K562 (cell line): ENCODE measurements at regions of chr11 and their contacts with region 1.

Region 1: DNA sequence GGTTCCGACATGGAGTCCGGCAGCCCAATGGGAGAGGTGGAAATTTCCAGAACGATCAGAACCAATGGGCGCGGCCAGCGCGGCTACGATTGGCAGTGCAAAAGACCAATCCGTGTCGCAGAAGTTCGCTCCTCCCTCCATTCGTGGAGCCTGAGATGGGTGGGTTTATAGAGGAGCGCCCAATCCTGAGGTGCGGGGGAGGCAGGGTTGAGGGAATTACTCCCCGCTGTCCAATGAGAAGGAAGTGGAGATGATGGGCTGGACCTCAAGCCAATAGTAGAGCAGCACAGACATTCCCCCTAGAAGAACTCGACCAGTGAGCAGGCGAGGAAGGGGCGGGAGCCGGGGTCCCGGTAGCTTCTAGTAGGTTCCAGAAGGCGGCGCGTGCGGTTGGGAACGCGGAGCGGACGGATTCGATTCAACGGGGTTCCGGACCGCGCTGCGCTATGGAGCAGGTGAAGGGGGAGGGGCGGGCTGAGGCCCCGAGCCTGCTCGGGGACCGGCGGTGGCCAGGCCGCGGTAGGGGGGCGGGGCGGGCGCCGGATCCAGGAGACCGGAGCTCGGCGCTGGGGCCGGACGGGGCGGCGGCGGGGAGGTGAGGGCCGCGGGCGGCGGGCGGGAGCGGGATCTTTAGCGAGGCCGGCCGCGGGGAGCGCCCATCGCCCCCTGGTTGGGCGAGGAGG is at the start of gene STIP1:
- DNase-seq: peak; percentile 91 to 99 (median 96)
- ATAC-seq: peak; percentile 89
- H3K4me3 ChIP-seq: peak within 1 kb of the TSS; percentile 70
- H3K27ac ChIP-seq: peak within 1 kb of the TSS; percentile 89
- H3K4me1 ChIP-seq: peaks cover 25 to 50% of the 10 kb centered on the region in 2 experiments
- H3K27me3 ChIP-seq: no peaks in the 10 kb centered on the region
- CTCF ChIP-seq: peak; percentile 58 to 70 (median 64); a peak in 5 of 6 replicates
- EP300 ChIP-seq: peak; percentile 59; the same call in 1 of the 2 replicates
- POLR2A ChIP-seq: no peak
- RAD21 ChIP-seq: no peak
- polyA plus RNA-seq, gene STIP1: 58.1 to 122 TPM

Region 2: DNA sequence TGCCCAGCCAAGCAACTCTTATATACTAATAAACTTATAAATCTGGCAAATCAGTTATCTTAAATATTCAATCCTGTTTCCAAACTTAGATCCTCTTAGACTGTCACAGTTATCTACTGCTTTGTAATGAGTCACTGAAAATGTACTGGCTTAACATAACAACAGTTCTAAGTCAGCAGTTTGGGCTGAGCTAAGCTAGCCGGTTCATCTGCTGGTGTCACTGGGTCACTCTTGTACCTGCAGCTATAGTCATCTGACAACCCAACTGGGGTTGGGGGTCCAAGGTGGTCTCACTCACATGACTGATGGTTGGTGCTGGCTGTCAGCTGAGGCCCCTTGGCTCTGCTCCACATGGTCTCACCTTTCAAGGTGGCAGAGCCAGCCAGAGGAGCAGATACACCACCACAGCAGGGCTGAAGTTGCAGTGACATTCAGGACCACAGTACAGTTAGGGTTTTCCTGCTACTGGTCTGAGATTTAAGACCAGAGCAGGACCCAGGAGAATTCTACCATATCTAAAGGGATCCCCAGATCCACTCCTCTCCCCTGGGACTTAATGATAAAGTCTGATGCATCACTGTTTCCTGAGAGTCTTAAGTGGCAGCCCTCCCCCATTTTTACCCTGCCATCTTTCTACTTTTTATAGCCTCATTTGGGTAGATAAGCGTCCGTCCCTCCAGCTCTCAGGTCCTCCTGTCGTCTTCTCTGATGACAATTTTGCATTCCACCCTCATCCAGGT is 12.2 kb before region 1 on chr11:
- CTCF ChIA-PET with region 1: no interaction called
- POLR2A ChIA-PET with region 1: interaction called, 17 read pairs
- in situ Hi-C with region 1: no loop called
- intact Hi-C with region 1: no loop called
- DNase-seq: peak in 1 of 4 experiments; percentile 38
- ATAC-seq: peak; percentile 76
- H3K4me3 ChIP-seq: no peak overlapping the region
- H3K27ac ChIP-seq: no peak overlapping the region
- H3K4me1 ChIP-seq: peaks cover 3 to 10% of the 10 kb centered on the region in 2 experiments; a peak in 3 of 5 replicates
- H3K27me3 ChIP-seq: no peaks in the 10 kb centered on the region
- CTCF ChIP-seq: no peak
- EP300 ChIP-seq: no peak
- POLR2A ChIP-seq: no peak
- RAD21 ChIP-seq: no peak

Region 3: GRCh38 chr11:64196626-64197025 is 10.7 kb after region 1 on chr11:
- CTCF ChIA-PET with region 1: no interaction called
- POLR2A ChIA-PET with region 1: interaction called, 13 read pairs
- in situ Hi-C with region 1: no loop called
- intact Hi-C with region 1: no loop called
- DNase-seq: no peak
- ATAC-seq: no peak
- H3K4me3 ChIP-seq: no peak overlapping the region
- H3K27ac ChIP-seq: no peak overlapping the region
- H3K4me1 ChIP-seq: 0 out of 5 replicates have a peak, but pooled peaks cover 0 to 3% of the 10 kb centered on the region in 2 experiments
- H3K27me3 ChIP-seq: no peaks in the 10 kb centered on the region
- CTCF ChIP-seq: no peak
- EP300 ChIP-seq: no peak
- POLR2A ChIP-seq: no peak
- RAD21 ChIP-seq: no peak

Region 4: GRCh38 chr11:64225612-64226506 is 39.9 kb after region 1 on chr11 and contains the starts of genes NUDT22 and TRPT1:
- CTCF ChIA-PET with region 1: no interaction called
- POLR2A ChIA-PET with region 1: interaction called, 3 read pairs
- in situ Hi-C with region 1: no loop called
- intact Hi-C with region 1: loop called (anchors 2 kb)
- DNase-seq: peak; percentile 85 to 94 (median 90)
- ATAC-seq: peak; percentile 83
- H3K4me3 ChIP-seq: peak within 1 kb of the TSS; percentile 64
- H3K27ac ChIP-seq: peak within 1 kb of the TSS; percentile 93
- H3K4me1 ChIP-seq: peaks cover 8 to 72% of the 10 kb centered on the region in 2 experiments; a peak in 4 of 5 replicates
- H3K27me3 ChIP-seq: no peaks in the 10 kb centered on the region
- CTCF ChIP-seq: peak; percentile 19 to 38 (median 30); a peak in 3 of 6 replicates
- EP300 ChIP-seq: no peak
- POLR2A ChIP-seq: peak; percentile 81
- RAD21 ChIP-seq: peak in 1 of 2 experiments; percentile 7; a peak in 2 of 4 replicates
- polyA plus RNA-seq, gene NUDT22: 6.3 to 16.3 TPM
- polyA plus RNA-seq, gene TRPT1: 4.6 to 8.1 TPM

Region 5: GRCh38 chr11:64246871-64247728 is 61.1 kb after region 1 on chr11 and contains the start of gene PPP1R14B:
- CTCF ChIA-PET with region 1: no interaction called
- POLR2A ChIA-PET with region 1: interaction called, 11 read pairs
- in situ Hi-C with region 1: no loop called
- intact Hi-C with region 1: no loop called
- DNase-seq: peak; percentile 72 to 93 (median 84)
- ATAC-seq: peak; percentile 78
- H3K4me3 ChIP-seq: peak within 1 kb of the TSS; percentile 98
- H3K27ac ChIP-seq: peak within 1 kb of the TSS; percentile 98
- H3K4me1 ChIP-seq: peaks cover 42 to 92% of the 10 kb centered on the region in 2 experiments
- H3K27me3 ChIP-seq: no peaks in the 10 kb centered on the region
- CTCF ChIP-seq: peak; percentile 15 to 29 (median 26); a peak in 3 of 6 replicates
- EP300 ChIP-seq: peak; percentile 24
- POLR2A ChIP-seq: peak; percentile 90
- RAD21 ChIP-seq: no peak
- polyA plus RNA-seq, gene PPP1R14B: 7.7 to 17.5 TPM

Region 6: DNA sequence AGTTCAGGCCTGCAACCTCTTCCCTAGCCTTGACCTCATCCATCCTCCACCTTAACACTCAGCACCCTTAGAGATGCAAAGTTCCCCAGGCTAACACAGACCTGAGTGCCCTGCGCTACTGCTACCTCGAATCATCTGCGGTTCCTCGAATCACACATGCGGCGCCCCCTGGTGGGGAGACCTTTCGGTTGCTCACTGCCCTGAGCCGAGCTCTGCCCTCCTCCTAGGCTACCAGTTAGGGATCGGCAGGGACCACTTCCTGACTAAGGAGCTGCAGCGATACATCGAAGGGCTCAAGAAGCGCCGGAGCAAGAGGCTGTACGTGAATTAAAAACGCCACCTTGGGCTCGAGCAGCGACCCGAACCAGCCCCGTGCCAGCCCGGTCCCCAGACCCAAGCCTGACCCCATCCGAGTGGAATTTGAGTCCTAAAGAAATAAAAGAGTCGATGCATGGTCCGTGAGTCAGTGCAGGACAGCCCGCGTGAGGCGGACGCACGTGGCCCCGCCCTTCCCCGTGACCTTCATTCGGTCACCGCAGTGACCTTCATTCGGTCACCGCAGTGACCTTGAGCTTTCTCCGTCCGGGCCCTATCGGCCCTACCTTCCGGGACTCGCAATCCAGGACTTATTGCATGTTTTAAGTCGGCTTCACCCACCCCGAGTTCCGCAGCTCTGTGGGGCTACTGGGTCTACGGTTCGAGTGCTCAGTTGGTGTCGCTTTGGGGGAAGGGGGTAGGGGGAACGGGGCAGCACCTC is 118.5 kb after region 1 on chr11:
- CTCF ChIA-PET with region 1: no interaction called
- POLR2A ChIA-PET with region 1: interaction called, 6 read pairs
- in situ Hi-C with region 1: no loop called
- intact Hi-C with region 1: loop called (anchors 5 kb)
- DNase-seq: peak; percentile 64 to 95 (median 76)
- ATAC-seq: peak; percentile 69
- H3K4me3 ChIP-seq: peak overlapping the region; percentile 72
- H3K27ac ChIP-seq: peak overlapping the region; percentile 100
- H3K4me1 ChIP-seq: peaks cover 32 to 53% of the 10 kb centered on the region in 2 experiments
- H3K27me3 ChIP-seq: no peaks in the 10 kb centered on the region
- CTCF ChIP-seq: peak; percentile 84 to 94 (median 87)
- EP300 ChIP-seq: peak; percentile 19
- POLR2A ChIP-seq: peak; percentile 77
- RAD21 ChIP-seq: peak; percentile 60 to 65